Activated CD4-positive, alpha-beta memory T cell treated with anti-CD3 and anti-CD28 coated beads for 36 hours (primary cell): ENCODE measurements at regions of chr6 and their contacts with region 1.

Region 1: GRCh38 chr6:26473758-26474438 is 16.1 kb downstream of the BTN2A1 start:
- DNase-seq: peak; percentile 87
- H3K4me3 Mint-ChIP-seq: peak overlapping the region; percentile 98
- H3K27ac Mint-ChIP-seq: peak overlapping the region; percentile 100
- H3K4me1 Mint-ChIP-seq: peaks cover 42% of the 10 kb centered on the region
- H3K27me3 Mint-ChIP-seq: no peaks in the 10 kb centered on the region

Region 2: GRCh38 chr6:26175428-26176181 is 298.3 kb before region 1 on chr6:
- CTCF ChIA-PET with region 1: no interaction called
- POLR2A ChIA-PET with region 1: no interaction called
- intact Hi-C with region 1: loop called (anchors 5 kb)
- DNase-seq: peak; percentile 63
- H3K4me3 Mint-ChIP-seq: peak overlapping the region; percentile 24
- H3K27ac Mint-ChIP-seq: peak overlapping the region; percentile 43
- H3K4me1 Mint-ChIP-seq: peaks cover 31% of the 10 kb centered on the region
- H3K27me3 Mint-ChIP-seq: no peaks in the 10 kb centered on the region

Region 3: DNA sequence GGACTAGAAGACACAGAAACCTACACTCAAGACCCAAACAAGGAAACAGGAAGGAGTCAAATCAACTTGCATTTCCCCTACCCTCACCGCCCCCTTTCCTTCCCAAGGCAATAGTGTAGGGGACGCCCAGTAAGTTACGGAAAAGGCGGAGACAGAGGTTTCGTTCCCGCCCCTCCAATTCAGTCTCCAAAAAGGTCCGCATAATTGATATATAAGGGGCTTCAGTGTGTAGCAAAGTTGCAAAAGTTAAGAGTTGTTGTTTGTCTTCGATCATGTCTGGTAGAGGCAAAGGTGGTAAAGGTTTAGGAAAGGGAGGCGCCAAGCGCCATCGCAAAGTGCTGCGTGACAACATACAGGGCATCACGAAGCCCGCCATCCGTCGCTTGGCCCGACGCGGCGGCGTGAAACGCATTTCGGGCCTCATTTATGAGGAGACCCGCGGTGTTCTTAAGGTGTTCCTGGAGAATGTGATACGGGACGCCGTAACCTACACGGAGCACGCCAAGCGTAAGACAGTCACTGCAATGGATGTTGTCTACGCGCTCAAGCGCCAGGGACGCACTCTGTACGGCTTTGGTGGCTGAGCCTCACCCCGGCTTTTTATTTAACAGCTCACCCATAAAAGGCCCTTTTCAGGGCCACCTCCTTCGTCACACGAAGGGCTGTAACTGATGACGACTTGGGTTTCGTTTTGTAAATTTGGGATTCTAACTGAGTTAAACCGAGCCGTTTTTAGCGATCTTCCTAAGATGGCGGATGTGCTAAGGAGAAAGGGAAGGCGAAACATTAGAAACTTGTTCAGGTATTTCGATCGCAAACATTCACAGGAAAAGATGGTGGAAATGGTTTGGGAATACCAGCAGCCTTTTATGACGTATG is 233.5 kb before region 1 on chr6:
- CTCF ChIA-PET with region 1: no interaction called
- POLR2A ChIA-PET with region 1: no interaction called
- intact Hi-C with region 1: no loop called
- DNase-seq: peak; percentile 85
- H3K4me3 Mint-ChIP-seq: peak overlapping the region; percentile 70
- H3K27ac Mint-ChIP-seq: peak overlapping the region; percentile 91
- H3K4me1 Mint-ChIP-seq: peaks cover 20% of the 10 kb centered on the region
- H3K27me3 Mint-ChIP-seq: peaks cover 4% of the 10 kb centered on the region

Region 4: DNA sequence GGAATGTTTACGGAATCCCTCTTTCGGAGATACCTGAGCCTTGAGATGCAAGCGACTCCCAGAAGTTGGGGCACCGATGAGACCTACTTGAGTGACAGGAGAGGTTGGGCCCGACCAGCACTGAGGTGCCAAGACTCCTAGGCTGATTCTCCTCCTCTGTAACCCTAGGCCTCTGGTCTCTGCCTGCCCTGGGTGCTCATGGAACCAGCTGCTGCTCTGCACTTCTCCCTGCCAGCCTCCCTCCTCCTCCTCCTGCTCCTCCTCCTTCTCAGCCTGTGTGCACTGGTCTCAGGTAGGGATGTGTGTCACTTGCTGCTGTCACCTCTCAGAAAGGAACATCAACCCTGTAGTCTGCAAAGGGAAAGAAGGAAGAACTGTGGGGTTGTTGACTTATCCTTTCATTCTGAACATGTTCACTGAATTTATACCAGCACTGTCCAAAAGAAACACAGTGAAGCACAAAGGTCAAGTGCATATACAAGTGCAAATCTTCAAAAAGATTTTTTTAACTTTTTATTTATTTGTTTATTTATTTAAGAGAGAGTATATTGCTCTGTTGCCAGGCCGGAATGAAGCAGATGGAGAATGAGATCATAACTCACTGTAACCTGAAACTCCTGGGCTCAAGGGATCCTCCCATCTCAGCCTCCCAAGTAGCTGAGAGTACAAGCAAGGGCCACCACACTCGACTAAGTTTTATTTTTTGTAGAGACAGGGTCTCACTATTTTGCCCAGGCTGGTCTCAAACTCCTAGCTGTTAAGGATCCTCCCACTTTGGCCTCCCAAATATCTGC is 90.1 kb before region 1 on chr6:
- CTCF ChIA-PET with region 1: no interaction called
- POLR2A ChIA-PET with region 1: interaction called, 4 read pairs
- intact Hi-C with region 1: loop called (anchors 2 kb)
- DNase-seq: peak; percentile 50
- H3K4me3 Mint-ChIP-seq: peak overlapping the region; percentile 100
- H3K27ac Mint-ChIP-seq: peak overlapping the region; percentile 94
- H3K4me1 Mint-ChIP-seq: peaks cover 24% of the 10 kb centered on the region
- H3K27me3 Mint-ChIP-seq: no peaks in the 10 kb centered on the region

Region 5: GRCh38 chr6:26439657-26440056 is 34.2 kb before region 1 on chr6:
- CTCF ChIA-PET with region 1: no interaction called
- POLR2A ChIA-PET with region 1: interaction called, 5 read pairs
- intact Hi-C with region 1: loop called (anchors 1 kb)
- DNase-seq: no peak
- H3K4me3 Mint-ChIP-seq: peak overlapping the region; percentile 90
- H3K27ac Mint-ChIP-seq: peak overlapping the region; percentile 93
- H3K4me1 Mint-ChIP-seq: peaks cover 40% of the 10 kb centered on the region
- H3K27me3 Mint-ChIP-seq: no peaks in the 10 kb centered on the region

Region 6: GRCh38 chr6:26457806-26458688 is 15.9 kb before region 1 on chr6 and contains the start of gene BTN2A1:
- CTCF ChIA-PET with region 1: no interaction called
- POLR2A ChIA-PET with region 1: interaction called, 3 read pairs
- intact Hi-C with region 1: loop called (anchors 1 kb)
- DNase-seq: peak; percentile 79
- H3K4me3 Mint-ChIP-seq: peak within 1 kb of the TSS; percentile 98
- H3K27ac Mint-ChIP-seq: peak within 1 kb of the TSS; percentile 98
- H3K4me1 Mint-ChIP-seq: peaks cover 50% of the 10 kb centered on the region
- H3K27me3 Mint-ChIP-seq: no peaks in the 10 kb centered on the region
- total RNA-seq, gene BTN2A1: 17.6 to 19.6 TPM

Region 7: DNA sequence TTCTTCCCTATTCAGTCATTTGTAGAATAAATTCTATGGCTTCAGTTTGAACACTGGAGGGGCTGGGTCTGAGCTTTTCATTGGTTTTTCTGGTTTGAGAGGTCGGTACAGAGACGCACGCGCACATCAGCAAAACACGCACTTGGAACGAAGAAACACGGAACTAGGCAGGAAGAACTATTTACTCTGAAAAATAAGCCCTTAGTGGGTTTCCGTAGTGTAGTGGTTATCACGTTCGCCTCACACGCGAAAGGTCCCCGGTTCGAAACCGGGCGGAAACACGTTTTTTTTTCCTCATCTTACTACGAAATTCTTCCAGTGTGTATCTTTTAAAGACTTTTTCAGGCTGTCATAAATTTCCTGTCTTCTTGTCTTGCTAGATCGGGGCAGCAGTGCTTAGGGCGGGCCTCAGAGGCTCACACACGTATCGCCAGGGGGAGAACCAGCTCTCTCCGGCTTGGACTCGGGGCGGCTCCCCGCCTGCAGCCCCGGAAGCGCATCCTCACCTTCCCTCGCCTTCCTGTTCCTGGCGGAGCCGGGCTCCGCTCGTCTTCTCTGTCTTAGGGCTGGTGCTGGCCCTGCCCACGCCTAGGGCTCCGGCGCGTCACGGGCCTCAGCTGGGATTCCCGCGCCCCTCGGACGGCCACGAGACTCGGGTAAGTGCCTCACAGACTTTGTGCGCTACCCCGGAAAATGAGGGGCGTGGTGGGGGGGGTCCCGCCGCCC is 64.1 kb after region 1 on chr6 and contains the start of gene HMGN4:
- CTCF ChIA-PET with region 1: interaction called, 3 read pairs
- POLR2A ChIA-PET with region 1: interaction called, 9 read pairs
- intact Hi-C with region 1: loop called (anchors 1 kb)
- DNase-seq: peak; percentile 88
- H3K4me3 Mint-ChIP-seq: peak within 1 kb of the TSS; percentile 84
- H3K27ac Mint-ChIP-seq: peak within 1 kb of the TSS; percentile 97
- H3K4me1 Mint-ChIP-seq: peaks cover 64% of the 10 kb centered on the region
- H3K27me3 Mint-ChIP-seq: peaks cover 2% of the 10 kb centered on the region
- total RNA-seq, gene HMGN4: 93.2 to 96.0 TPM